ENCODE measurements at regions of chr21 and their contacts with region 1.

Region 1: DNA sequence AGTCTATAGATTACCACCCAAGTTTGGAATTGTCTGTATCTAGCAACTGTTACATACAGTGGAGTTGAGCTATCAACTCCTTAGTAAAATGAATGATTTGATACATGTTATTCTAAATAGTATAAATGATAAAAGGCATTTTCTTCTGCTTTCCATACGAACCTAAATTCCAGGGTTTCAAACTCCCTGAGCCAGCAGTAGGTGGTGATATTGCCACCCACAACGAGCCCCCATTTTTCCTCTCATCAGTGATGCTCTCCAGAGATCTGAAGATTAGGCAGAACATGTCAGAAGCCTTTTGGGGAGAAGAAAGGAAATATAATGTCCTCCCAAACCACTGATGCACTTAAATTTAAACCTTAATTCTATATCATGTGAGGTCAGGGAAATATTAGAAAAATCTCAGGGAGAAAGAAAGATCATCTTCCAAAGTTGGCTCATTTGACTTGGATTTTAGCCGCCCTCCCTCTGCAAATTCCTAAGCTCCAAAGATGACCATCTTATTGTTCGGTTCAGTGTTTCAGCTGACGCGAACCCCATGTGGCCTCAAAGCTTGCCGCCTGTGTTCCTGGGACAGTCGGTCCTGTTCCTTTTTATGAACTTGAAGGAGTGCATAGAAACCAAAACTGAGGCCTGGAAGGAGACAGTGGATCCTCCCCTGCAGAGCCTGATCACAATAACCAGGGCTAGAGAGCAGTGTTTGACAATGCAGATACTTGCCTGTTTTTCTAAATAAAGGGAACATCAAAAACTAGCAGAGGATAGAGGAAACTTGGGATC is 2.3 kb downstream of the EVA1C start:
- DNase-seq: peak; percentile 8
- H3K4me3 Mint-ChIP-seq: no peak overlapping the region
- H3K27ac Mint-ChIP-seq: no peak overlapping the region
- H3K4me1 Mint-ChIP-seq: peaks cover 14% of the 10 kb centered on the region
- H3K27me3 Mint-ChIP-seq: peaks cover 33% of the 10 kb centered on the region
- CTCF ChIP-seq: no peak

Region 2: GRCh38 chr21:32007456-32007855 is 407.3 kb before region 1 on chr21:
- CTCF ChIA-PET with region 1: no interaction called
- intact Hi-C with region 1: no loop called
- DNase-seq: no peak
- H3K4me3 Mint-ChIP-seq: no peak overlapping the region
- H3K27ac Mint-ChIP-seq: no peak overlapping the region
- H3K4me1 Mint-ChIP-seq: no peaks in the 10 kb centered on the region
- H3K27me3 Mint-ChIP-seq: peaks cover 16% of the 10 kb centered on the region
- CTCF ChIP-seq: no peak

Region 3: DNA sequence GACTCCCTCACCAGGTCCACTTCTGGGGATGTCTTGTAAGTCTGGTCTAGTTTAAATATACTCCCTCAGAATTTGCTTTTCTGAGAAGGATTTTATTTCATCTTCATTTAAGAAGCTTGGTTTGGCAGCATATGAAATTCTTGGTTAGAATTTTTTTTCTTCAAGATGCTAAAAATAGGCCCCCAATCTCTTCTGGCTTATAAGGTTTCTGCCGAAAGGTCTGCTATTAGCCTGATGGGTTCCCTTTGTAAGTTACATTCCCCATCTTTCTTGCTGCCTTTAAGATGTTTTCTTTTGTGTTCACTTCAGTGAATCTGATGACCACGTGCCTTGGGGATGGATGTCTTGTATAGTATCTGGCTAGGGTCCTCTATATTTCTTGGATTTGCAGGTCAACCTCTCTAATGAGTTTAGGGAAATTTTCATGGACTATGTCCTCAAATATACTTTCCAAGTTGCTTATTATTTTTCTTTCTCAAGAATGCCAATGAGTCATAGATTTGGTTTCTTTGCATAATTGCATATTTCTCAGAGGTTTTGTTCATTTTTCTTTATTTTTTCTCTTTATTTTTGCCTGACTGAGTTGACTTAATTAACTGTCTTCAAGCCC is 151.2 kb after region 1 on chr21:
- CTCF ChIA-PET with region 1: no interaction called
- intact Hi-C with region 1: loop called (anchors 2 kb)
- DNase-seq: no peak
- H3K4me3 Mint-ChIP-seq: no peak overlapping the region
- H3K27ac Mint-ChIP-seq: no peak overlapping the region
- H3K4me1 Mint-ChIP-seq: no peaks in the 10 kb centered on the region
- H3K27me3 Mint-ChIP-seq: no peaks in the 10 kb centered on the region
- CTCF ChIP-seq: no peak

Region 4: GRCh38 chr21:33169359-33169758 is 754.6 kb after region 1 on chr21:
- CTCF ChIA-PET with region 1: no interaction called
- intact Hi-C with region 1: no loop called
- DNase-seq: no peak
- H3K4me3 Mint-ChIP-seq: no peak overlapping the region
- H3K27ac Mint-ChIP-seq: no peak overlapping the region
- H3K4me1 Mint-ChIP-seq: no peaks in the 10 kb centered on the region
- H3K27me3 Mint-ChIP-seq: peaks cover 69% of the 10 kb centered on the region
- CTCF ChIP-seq: no peak